Head of caudate nucleus (tissue), 42 donors: ENCODE measurements at regions of chrX and their contacts with region 1.

Region 1: DNA sequence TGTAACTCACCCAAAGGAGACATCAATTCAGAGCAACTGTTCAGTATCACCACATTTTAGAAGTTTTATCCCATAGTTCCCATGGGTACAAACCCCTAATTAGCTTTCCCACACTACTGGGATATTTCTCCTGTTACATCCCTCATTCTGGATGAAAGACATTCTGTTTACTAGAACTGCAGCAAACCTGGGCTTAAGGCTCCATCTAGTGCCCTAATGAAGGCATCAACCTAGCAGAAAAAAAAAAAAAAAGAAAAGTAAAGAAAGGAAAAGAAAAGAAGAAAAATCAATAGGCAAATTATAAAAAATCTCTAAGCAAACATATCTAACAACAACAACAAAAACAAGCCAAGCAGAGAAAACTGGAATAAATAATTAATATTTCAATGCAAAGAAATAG is 133.7 kb upstream of the CPXCR1 start:
- DNase-seq: peak in 12 of 42 donors; percentile 0 to 47 (median 12)

Region 2: GRCh38 chrX:88425739-88426138 is 187.6 kb before region 1 on chrX:
- intact Hi-C with region 1: loop called (anchors 5 kb)
- DNase-seq: peak in 13 of 42 donors; percentile 1 to 44 (median 18)

Region 3: GRCh38 chrX:88903989-88904718 is 290.8 kb after region 1 on chrX:
- intact Hi-C with region 1: no loop called
- DNase-seq: no peak

Region 4: DNA sequence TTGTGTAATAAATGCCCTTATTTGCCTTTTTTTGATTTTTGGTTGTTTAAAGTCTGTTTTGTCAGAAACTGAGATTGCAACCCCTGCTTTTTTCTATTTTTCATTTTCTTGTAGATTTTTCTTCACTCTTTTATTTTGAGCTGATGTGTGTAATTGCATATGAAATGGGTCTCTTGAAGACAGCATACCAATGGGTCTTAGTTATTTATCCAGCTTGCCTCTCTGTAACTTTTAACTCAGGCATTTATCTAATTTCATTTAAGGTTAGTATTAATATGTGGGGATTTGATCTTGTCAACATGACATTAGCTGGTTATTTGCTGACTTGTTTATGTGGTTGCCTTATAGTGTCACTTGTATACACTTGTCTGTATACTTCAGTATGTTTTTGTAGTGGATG is 511.6 kb after region 1 on chrX:
- intact Hi-C with region 1: no loop called
- DNase-seq: no peak